Calu3 (cell line): ENCODE measurements at regions of chrX and their contacts with region 1.

Region 1: GRCh38 chrX:113400193-113400704 is 559.6 kb upstream of the AMOT start:
- DNase-seq: peak; percentile 42
- H3K4me3 Mint-ChIP-seq: peak overlapping the region; percentile 39
- H3K27ac Mint-ChIP-seq: peak overlapping the region; percentile 95
- H3K4me1 Mint-ChIP-seq: peaks cover 19% of the 10 kb centered on the region
- H3K27me3 Mint-ChIP-seq: no peaks in the 10 kb centered on the region
- CTCF ChIP-seq: no peak

Region 2: GRCh38 chrX:113269203-113269602 is 131.0 kb before region 1 on chrX:
- CTCF ChIA-PET with region 1: no interaction called
- intact Hi-C with region 1: loop called (anchors 5 kb)
- DNase-seq: no peak
- H3K4me3 Mint-ChIP-seq: no peak overlapping the region
- H3K27ac Mint-ChIP-seq: no peak overlapping the region
- H3K4me1 Mint-ChIP-seq: no peaks in the 10 kb centered on the region
- H3K27me3 Mint-ChIP-seq: no peaks in the 10 kb centered on the region
- CTCF ChIP-seq: no peak

Region 3: DNA sequence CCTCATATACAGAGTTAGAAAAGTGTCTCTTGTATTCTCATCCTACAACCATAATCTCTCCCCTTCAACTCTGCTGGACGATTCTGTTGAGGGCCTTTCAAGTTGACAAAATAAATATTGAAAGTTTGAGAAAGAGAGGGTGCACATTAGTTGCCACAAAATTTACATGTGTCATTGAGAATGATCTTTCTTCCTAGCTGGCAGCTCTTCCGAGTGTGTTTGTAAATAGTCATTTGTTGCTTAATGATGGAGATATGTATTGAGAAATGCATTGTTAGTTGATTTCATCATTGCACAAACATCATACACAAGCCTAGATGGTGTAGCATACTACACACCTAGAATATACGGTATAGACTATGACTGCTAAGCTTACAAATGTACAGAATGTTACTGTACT is 73.2 kb after region 1 on chrX:
- CTCF ChIA-PET with region 1: no interaction called
- intact Hi-C with region 1: loop called (anchors 5 kb)
- DNase-seq: no peak
- H3K4me3 Mint-ChIP-seq: no peak overlapping the region
- H3K27ac Mint-ChIP-seq: no peak overlapping the region
- H3K4me1 Mint-ChIP-seq: no peaks in the 10 kb centered on the region
- H3K27me3 Mint-ChIP-seq: no peaks in the 10 kb centered on the region
- CTCF ChIP-seq: no peak